A549 (cell line): ENCODE measurements at regions of chr1 and their contacts with region 1.

Region 1: DNA sequence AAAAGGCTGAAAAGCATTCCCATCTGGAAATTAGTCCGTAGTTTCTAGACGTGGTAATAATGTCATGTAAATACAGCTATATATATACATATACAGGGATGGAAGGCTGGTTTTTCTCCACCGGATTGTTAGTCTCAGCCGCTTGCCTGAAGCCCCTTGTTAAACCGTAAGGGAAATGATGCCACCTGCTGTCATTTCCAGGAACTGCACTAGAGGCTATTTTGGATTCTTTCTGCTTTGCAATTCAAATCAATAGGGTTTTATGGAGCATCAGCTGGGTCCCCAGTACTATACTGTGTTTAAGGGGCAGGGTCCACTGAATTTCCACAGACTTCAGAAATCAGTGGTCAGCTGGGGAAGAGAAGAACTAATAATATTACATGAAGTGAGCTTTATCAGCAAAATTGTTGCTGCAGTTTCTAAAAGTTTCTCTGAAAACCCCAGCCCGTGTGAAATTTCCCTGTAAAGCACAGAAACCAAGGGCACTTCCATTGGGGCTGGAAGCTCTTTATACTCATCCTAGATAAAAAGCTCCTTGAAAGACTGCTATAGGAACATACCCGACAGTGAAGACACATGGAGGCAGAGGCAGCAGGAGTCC is 33.8 kb upstream of the MPZL1 start:
- DNase-seq: peak; percentile 76 to 78
- ATAC-seq: peak; percentile 60 to 82
- H3K4me3 ChIP-seq: no peak overlapping the region
- H3K27ac ChIP-seq: no peak overlapping the region
- H3K4me1 ChIP-seq: peaks cover 2% of the 10 kb centered on the region; the same call in 2 of the 3 replicates
- CTCF ChIP-seq: peak; percentile 91
- EP300 ChIP-seq: no peak
- POLR2A ChIP-seq: no peak
- RAD21 ChIP-seq: peak; percentile 94 to 96

Region 2: DNA sequence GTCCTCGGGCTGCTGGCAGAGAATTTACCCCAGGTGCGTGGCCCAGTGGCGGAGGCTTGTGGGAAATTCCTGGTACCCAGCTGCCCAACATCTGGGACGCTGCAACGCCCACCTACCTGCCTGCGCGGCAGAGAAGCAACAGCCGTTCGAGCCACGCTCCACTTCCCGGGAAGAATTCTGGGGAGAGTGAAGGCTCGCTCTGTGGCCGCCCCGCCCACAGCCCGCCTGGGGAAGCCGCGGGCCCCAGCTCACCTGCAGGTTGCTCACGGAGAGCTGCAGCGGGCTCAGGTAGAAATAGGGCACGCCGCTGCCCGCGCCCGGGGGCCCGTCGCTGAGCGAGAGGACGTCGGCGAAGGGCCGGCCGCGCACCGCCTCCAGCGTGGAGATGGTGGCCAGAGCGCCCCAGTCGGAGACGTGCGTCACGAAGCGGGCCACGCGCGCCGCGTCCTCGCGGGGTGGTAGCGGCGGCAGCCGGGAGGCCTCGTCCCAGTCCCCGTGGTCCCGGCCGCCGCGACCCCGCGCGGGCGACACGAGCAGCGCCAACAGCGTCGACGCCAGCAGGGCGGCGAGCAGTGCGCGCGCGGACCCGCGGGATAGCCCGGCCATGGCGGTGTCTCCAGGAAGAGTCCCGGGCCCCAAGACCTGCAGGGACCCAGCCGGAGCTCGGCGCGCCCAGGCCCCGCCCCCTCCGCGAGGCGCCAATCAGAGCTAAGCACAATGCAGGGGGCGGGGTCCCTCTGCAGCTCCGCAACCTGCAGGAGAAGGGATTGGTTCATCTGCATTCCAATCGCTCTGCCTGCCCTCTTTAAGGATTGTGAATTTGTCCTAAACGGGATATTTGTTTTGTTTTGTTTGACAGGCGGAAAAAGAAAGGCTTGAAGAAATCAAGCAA is 134.6 kb before region 1 on chr1 and contains the start of gene CREG1:
- CTCF ChIA-PET with region 1: interaction called, 24 read pairs
- POLR2A ChIA-PET with region 1: no interaction called
- DNase-seq: peak; percentile 93 to 96
- ATAC-seq: peak; percentile 95 to 100
- H3K4me3 ChIP-seq: peak within 1 kb of the TSS; percentile 68
- H3K27ac ChIP-seq: peak within 1 kb of the TSS; percentile 77 to 95
- H3K4me1 ChIP-seq: peaks cover 21% of the 10 kb centered on the region
- CTCF ChIP-seq: no peak
- EP300 ChIP-seq: no peak
- POLR2A ChIP-seq: peak; percentile 90
- RAD21 ChIP-seq: no peak
- polyA plus RNA-seq, gene CREG1: 129 and 132 TPM in 2 replicates

Region 3: DNA sequence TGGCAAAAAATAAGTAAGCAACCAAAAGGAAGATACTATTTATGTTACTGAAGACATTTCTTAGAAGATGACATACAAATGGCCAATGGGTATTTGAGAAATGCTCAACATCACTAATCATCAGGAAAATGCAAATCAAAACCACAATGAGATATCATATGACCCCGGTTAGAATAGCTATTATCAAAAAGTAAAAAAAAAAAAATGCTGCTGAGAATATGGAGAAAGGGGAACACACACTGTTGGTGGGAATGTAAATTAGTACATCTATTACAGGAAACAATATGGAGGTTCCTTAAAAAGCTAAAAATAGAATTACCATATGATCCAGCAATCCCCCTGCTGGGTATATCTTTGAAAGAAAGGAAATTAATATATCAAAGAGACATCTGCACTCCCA is 100.1 kb before region 1 on chr1:
- CTCF ChIA-PET with region 1: interaction called, 20 read pairs
- POLR2A ChIA-PET with region 1: interaction called, 4 read pairs
- DNase-seq: no peak
- ATAC-seq: no peak
- H3K4me3 ChIP-seq: no peak overlapping the region
- H3K27ac ChIP-seq: no peak overlapping the region
- H3K4me1 ChIP-seq: no peaks in the 10 kb centered on the region
- CTCF ChIP-seq: no peak
- EP300 ChIP-seq: no peak
- POLR2A ChIP-seq: no peak
- RAD21 ChIP-seq: no peak

Region 4: GRCh38 chr1:167605576-167605975 is 82.4 kb before region 1 on chr1:
- CTCF ChIA-PET with region 1: interaction called, 115 read pairs
- POLR2A ChIA-PET with region 1: no interaction called
- DNase-seq: no peak
- ATAC-seq: no peak
- H3K4me3 ChIP-seq: no peak overlapping the region
- H3K27ac ChIP-seq: no peak overlapping the region
- H3K4me1 ChIP-seq: peaks cover 8% of the 10 kb centered on the region; the same call in 2 of the 3 replicates
- CTCF ChIP-seq: no peak
- EP300 ChIP-seq: no peak
- POLR2A ChIP-seq: no peak
- RAD21 ChIP-seq: no peak

Region 5: GRCh38 chr1:167663002-167663772 is 24.8 kb before region 1 on chr1:
- CTCF ChIA-PET with region 1: interaction called, 24 read pairs
- POLR2A ChIA-PET with region 1: no interaction called
- DNase-seq: peak; percentile 49 to 57
- ATAC-seq: peak; percentile 82 to 87
- H3K4me3 ChIP-seq: no peak overlapping the region
- H3K27ac ChIP-seq: peak overlapping the region; percentile 37 to 75
- H3K4me1 ChIP-seq: peaks cover 35% of the 10 kb centered on the region
- CTCF ChIP-seq: no peak
- EP300 ChIP-seq: no peak
- POLR2A ChIP-seq: no peak
- RAD21 ChIP-seq: no peak

Region 6: GRCh38 chr1:167715157-167715999 is 27.4 kb after region 1 on chr1:
- CTCF ChIA-PET with region 1: interaction called, 13 read pairs
- POLR2A ChIA-PET with region 1: no interaction called
- DNase-seq: peak; percentile 78 to 92
- ATAC-seq: peak; percentile 30 to 70; a peak in 5 of 6 replicates
- H3K4me3 ChIP-seq: peak overlapping the region; percentile 62
- H3K27ac ChIP-seq: peak overlapping the region; percentile 95 to 98
- H3K4me1 ChIP-seq: peaks cover 20% of the 10 kb centered on the region
- CTCF ChIP-seq: peak; percentile 89
- EP300 ChIP-seq: no peak
- POLR2A ChIP-seq: no peak
- RAD21 ChIP-seq: peak in 1 of 2 experiments; percentile 33; a peak in 2 of 5 replicates

Region 7: DNA sequence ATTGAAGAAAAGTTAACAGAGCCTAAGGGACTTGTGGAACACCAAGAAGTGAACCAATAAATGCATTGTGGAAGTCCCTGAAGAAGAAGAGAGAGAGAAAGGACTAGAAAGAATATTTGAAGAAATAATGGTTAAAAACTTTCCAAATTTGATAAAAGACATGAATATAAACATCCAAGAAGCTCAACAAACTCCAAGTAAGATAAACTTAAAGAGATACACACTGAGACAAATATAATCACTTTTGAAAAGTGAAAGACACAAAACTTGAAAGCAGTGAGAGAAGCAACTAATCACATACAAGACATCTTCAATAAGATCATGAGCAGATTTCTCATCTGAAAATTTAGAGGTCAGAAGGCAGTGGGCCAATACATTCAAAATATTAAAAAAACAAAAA is 125.0 kb after region 1 on chr1:
- CTCF ChIA-PET with region 1: no interaction called
- POLR2A ChIA-PET with region 1: no interaction called
- DNase-seq: no peak
- ATAC-seq: no peak
- H3K4me3 ChIP-seq: no peak overlapping the region
- H3K27ac ChIP-seq: no peak overlapping the region
- H3K4me1 ChIP-seq: no peaks in the 10 kb centered on the region
- CTCF ChIP-seq: no peak
- EP300 ChIP-seq: no peak
- POLR2A ChIP-seq: no peak
- RAD21 ChIP-seq: no peak